CD4-positive, alpha-beta T cell (primary cell): ENCODE measurements at regions of chr13 and their contacts with region 1.

Region 1: DNA sequence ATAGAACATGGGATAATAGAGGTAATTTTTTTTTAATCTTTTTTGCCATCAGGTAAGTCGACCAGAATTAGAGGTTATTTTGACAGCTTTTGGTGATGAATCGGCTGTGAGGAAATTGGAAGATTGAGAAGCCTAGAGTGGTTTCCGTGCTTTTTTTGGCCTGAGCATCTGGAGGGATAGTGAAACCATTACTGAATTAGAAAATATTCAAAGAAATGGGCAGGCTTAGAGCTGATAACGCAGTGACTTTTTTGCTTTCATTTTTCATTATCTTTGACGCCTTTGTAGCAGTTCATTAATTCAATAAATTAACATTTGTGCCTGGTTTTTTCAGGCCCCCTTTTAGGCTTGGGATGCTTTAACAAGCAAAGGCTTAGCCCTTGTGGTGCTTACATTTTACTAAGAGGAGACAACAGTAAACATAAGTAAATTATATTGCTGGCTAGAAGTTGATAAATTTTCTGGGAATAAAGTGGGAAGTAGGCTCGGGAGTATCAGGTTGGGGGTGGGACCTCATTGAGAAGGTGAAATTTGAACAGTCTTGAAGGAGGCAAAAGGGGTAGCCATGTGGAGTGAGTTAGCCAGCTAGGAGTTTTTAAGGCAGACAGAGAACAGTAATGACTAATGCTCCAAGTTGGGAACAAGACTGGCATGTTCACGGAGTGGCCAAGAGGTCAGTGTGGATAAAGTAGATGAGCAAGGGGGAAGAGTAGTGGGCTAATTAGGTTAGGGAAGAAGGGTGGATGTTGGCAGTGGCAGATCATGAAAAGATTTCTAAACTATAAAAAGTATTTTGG is 36.5 kb downstream of the GTF2F2 start:
- DNase-seq: no peak
- ATAC-seq: no peak
- H3K4me3 ChIP-seq: no peak overlapping the region
- H3K4me3 Mint-ChIP-seq: no peak overlapping the region
- H3K27ac ChIP-seq: no peak overlapping the region
- H3K27ac Mint-ChIP-seq: no peak overlapping the region
- H3K4me1 ChIP-seq: no peaks in the 10 kb centered on the region
- H3K4me1 Mint-ChIP-seq: no peaks in the 10 kb centered on the region
- H3K27me3 ChIP-seq: no peaks in the 10 kb centered on the region
- H3K27me3 Mint-ChIP-seq: no peaks in the 10 kb centered on the region
- CTCF ChIP-seq: no peak

Region 2: DNA sequence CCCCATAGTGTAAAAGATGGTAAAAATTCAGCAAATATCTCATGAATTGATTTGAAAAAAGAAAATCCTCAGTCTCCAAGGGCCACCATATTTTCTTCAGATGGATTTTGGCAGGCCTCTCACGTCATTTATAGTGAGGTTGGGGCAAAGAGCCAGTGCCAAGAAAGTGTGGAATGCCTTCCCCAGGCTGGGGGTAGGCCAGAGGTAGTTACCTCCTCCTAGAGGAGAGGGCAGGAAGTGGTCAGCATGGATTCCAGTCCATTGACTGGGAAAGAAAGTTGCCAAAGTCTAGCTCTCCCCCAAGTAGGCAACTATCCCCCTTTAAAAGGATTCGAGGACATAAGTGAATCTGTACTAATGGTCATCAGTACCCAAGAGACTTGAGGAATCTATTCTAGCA is 112.4 kb after region 1 on chr13:
- CTCF ChIA-PET with region 1: no interaction called
- POLR2A ChIA-PET with region 1: no interaction called
- intact Hi-C with region 1: loop called in 1 of 2 experiments (anchors 5 kb)
- DNase-seq: no peak
- ATAC-seq: no peak
- H3K4me3 ChIP-seq: no peak overlapping the region
- H3K4me3 Mint-ChIP-seq: no peak overlapping the region
- H3K27ac ChIP-seq: no peak overlapping the region
- H3K27ac Mint-ChIP-seq: no peak overlapping the region
- H3K4me1 ChIP-seq: no peaks in the 10 kb centered on the region
- H3K4me1 Mint-ChIP-seq: no peaks in the 10 kb centered on the region
- H3K27me3 ChIP-seq: no peaks in the 10 kb centered on the region
- H3K27me3 Mint-ChIP-seq: no peaks in the 10 kb centered on the region
- CTCF ChIP-seq: no peak